Posterior cingulate gyrus (tissue), 11 donors: ENCODE measurements at regions of chr12 and their contacts with region 1.

Region 1: GRCh38 chr12:56117778-56118687 is at the start of gene ZC3H10:
- DNase-seq: peak; percentile 93 to 100 (median 96)

Region 2: GRCh38 chr12:55996715-55997534 is 121.1 kb before region 1 on chr12 and contains the start of gene SUOX:
- intact Hi-C with region 1: loop called (anchors 5 kb)
- DNase-seq: peak; percentile 94 to 100 (median 98)

Region 3: GRCh38 chr12:56041552-56042429 is 76.2 kb before region 1 on chr12 and contains the start of gene RPS26:
- intact Hi-C with region 1: loop called (anchors 5 kb)
- DNase-seq: peak; percentile 80 to 98 (median 90)

Region 4: GRCh38 chr12:56079665-56080555 is 38.1 kb before region 1 on chr12 and contains the start of gene ERBB3:
- intact Hi-C with region 1: loop called (anchors 5 kb)
- DNase-seq: peak; percentile 53 to 96 (median 76)

Region 5: DNA sequence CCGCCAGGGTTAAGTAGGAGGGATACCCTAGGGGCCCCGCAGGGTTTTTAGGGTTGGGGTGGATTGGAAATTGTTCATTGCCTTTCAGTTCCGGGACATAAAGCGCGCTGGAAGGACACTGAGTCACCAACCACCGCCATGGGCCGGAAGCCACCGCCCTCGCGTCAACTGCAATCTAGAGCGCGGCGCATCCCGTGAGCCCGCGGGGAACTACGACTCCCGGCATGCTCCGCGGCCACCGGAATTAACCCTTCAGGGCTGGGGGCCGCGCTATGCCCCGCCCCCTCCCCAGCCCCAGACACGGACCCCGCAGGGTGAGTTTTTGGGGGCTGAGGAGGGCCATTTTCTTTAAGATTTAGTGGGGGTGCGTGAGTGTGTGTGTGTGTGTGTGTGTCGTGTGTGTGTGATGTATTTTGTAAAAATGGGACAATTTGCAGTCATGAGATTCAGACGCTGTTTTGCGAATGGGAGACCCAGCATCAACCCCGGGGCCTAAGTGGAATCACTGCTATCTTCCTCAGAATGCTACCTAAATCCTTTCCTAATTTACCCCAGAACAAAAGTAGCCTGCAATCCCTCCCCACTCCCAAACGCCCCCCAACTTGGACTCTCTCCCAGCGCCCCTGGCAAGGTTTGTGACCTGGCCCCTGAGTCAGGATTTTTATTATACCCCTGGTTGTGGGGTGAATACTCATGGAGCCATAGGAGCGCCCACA is 34.4 kb after region 1 on chr12 and contains the start of gene MYL6B:
- intact Hi-C with region 1: loop called (anchors 5 kb)
- DNase-seq: peak; percentile 89 to 99 (median 94)

Region 6: DNA sequence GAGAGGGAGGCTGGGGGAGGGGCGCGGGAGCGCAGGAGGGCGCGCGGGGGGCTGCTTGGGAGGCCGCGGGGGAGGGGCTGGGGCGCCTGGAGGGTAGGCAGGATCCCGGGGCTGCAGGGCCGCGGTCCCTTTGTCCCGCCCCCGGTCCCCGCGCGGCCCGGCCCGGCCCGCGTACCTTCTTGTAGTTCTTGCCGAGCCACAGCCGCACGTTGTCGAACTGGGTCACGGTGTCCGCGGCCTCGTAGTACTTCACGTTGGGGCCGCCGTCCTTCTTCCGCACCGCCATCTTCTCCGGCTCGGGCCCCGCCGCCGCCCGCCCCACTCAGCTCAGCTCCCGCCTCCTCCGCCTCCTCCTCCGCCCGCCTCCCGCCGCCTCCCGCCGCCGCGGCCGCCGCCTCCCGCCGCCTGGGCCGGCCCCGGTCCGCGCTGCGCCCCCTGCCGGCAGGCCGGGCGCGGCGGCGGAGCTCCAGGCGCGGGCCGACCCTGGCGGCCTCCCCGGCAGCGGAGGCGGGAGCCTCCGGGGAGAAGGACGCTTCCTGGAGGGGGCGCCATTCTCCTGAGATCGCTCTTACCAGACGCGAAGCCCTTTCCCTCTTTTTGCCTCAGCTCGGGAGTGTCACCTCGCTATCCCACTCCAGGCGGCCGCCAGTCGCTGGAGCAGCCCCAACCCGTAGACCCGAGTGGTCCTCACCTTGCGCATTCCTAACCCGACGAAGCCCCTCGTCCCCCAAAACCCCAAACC is 71.3 kb after region 1 on chr12 and contains the start of gene SMARCC2:
- intact Hi-C with region 1: loop called (anchors 2 kb)
- DNase-seq: peak; percentile 58 to 96 (median 78)

Region 7: DNA sequence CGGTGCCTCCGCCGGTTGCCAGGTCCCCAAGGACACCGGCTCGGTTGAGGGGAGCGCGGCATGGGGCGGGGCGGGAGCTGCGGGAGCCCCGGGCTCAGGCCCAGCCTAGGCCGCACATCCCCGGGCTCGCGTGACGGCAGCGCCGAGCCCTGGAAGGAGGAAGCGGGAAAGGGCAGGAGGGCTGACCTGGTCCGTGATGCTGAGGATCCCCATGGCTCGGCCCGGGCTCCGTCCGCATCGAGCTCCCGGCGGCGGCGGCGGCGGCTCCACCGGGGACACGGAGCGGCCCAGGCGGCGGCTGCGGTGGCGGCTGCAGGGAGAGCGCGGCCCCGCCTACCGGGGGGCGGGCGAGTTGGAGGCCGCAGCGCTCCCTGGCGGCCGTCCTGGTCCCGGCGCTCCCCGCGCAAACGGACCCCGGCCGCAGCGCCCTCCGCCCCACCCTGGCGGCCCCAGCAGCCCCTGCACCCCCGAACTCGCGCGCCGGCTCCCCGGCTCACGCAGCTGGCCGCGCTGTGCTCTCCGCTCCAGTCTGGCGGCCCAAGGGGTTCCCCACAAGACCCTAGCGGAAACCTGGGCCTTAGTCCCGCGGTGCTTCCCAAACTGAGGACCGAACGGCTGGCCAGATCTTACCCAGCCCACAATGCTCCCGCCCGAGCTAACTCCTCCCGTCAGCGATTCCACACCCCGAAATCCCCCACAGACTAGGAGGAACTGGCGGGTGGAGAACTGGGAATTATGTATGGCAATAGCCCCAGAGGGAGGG is 140.2 kb after region 1 on chr12 and contains the start of gene ANKRD52:
- intact Hi-C with region 1: loop called (anchors 2 kb)
- DNase-seq: peak; percentile 53 to 96 (median 70)